K562 (cell line): ENCODE measurements at regions of chr20 and their contacts with region 1.

Region 1: GRCh38 chr20:9359561-9360308 is 154.7 kb upstream of the LAMP5 start:
- DNase-seq: peak in 2 of 4 experiments; percentile 13 to 41
- ATAC-seq: no peak
- H3K4me3 ChIP-seq: no peak overlapping the region
- H3K27ac ChIP-seq: no peak overlapping the region
- H3K4me1 ChIP-seq: no peaks in the 10 kb centered on the region; a peak in 1 of 5 replicates
- H3K27me3 ChIP-seq: no peaks in the 10 kb centered on the region
- CTCF ChIP-seq: peak; percentile 29 to 55 (median 36); a peak in 3 of 6 replicates
- EP300 ChIP-seq: no peak
- POLR2A ChIP-seq: no peak
- RAD21 ChIP-seq: peak; percentile 62 to 67

Region 2: GRCh38 chr20:8756410-8756809 is 603.3 kb before region 1 on chr20:
- CTCF ChIA-PET with region 1: interaction called, 3 read pairs
- POLR2A ChIA-PET with region 1: no interaction called
- in situ Hi-C with region 1: loop called (anchors 10 kb)
- intact Hi-C with region 1: loop called (anchors 10 kb)
- DNase-seq: peak in 2 of 4 experiments; percentile 25 to 29
- ATAC-seq: peak; percentile 41; the same call in 1 of the 3 replicates
- H3K4me3 ChIP-seq: no peak overlapping the region
- H3K27ac ChIP-seq: no peak overlapping the region
- H3K4me1 ChIP-seq: no peaks in the 10 kb centered on the region
- H3K27me3 ChIP-seq: no peaks in the 10 kb centered on the region
- CTCF ChIP-seq: no peak
- EP300 ChIP-seq: no peak
- POLR2A ChIP-seq: no peak
- RAD21 ChIP-seq: no peak

Region 3: GRCh38 chr20:8764344-8764962 is 595.3 kb before region 1 on chr20:
- CTCF ChIA-PET with region 1: no interaction called
- POLR2A ChIA-PET with region 1: no interaction called
- in situ Hi-C with region 1: loop called (anchors 10 kb)
- intact Hi-C with region 1: loop called (anchors 10 kb)
- DNase-seq: no peak
- ATAC-seq: no peak
- H3K4me3 ChIP-seq: no peak overlapping the region
- H3K27ac ChIP-seq: no peak overlapping the region
- H3K4me1 ChIP-seq: no peaks in the 10 kb centered on the region
- H3K27me3 ChIP-seq: no peaks in the 10 kb centered on the region
- CTCF ChIP-seq: no peak
- EP300 ChIP-seq: no peak
- POLR2A ChIP-seq: no peak
- RAD21 ChIP-seq: no peak

Region 4: GRCh38 chr20:8790442-8791074 is 569.2 kb before region 1 on chr20:
- CTCF ChIA-PET with region 1: interaction called, 5 read pairs
- POLR2A ChIA-PET with region 1: no interaction called
- in situ Hi-C with region 1: no loop called
- intact Hi-C with region 1: loop called (anchors 1 kb)
- DNase-seq: peak; percentile 15 to 44 (median 26)
- ATAC-seq: no peak
- H3K4me3 ChIP-seq: no peak overlapping the region
- H3K27ac ChIP-seq: no peak overlapping the region
- H3K4me1 ChIP-seq: no peaks in the 10 kb centered on the region
- H3K27me3 ChIP-seq: no peaks in the 10 kb centered on the region
- CTCF ChIP-seq: peak; percentile 51 to 70 (median 67); a peak in 4 of 6 replicates
- EP300 ChIP-seq: no peak
- POLR2A ChIP-seq: no peak
- RAD21 ChIP-seq: peak; percentile 62 to 71

Region 5: DNA sequence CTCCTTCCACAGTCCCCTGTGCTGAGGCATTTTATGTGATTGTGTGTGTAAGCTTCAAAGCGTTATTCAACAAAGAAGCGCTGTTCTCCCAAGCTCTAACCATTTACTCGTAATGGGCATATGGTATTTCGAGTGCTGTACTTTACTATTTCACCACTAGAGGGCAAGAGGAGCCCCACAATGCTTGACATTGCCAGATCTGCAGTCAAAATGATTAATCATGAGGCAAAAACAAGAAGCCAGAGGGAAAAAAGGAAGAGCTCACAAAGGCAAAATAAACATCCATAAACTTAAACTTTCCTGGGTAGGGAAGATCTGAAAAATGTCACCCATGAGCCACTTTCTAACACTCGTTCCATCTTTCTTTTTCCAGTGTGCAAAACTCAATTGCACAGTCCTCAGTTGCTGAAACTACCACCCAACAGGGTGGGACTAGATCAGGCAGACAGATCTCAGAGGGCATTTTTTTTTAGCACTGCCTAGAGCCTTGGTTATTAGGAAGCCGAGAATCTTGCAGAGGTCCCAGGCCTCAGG is 505.9 kb before region 1 on chr20:
- CTCF ChIA-PET with region 1: no interaction called
- POLR2A ChIA-PET with region 1: no interaction called
- in situ Hi-C with region 1: no loop called
- intact Hi-C with region 1: loop called (anchors 1 kb)
- DNase-seq: peak; percentile 39 to 61 (median 40)
- ATAC-seq: peak; percentile 88
- H3K4me3 ChIP-seq: no peak overlapping the region
- H3K27ac ChIP-seq: no peak overlapping the region
- H3K4me1 ChIP-seq: no peaks in the 10 kb centered on the region
- H3K27me3 ChIP-seq: no peaks in the 10 kb centered on the region
- CTCF ChIP-seq: peak; percentile 55 to 71 (median 68); a peak in 5 of 6 replicates
- EP300 ChIP-seq: no peak
- POLR2A ChIP-seq: no peak
- RAD21 ChIP-seq: peak; percentile 72 to 75

Region 6: DNA sequence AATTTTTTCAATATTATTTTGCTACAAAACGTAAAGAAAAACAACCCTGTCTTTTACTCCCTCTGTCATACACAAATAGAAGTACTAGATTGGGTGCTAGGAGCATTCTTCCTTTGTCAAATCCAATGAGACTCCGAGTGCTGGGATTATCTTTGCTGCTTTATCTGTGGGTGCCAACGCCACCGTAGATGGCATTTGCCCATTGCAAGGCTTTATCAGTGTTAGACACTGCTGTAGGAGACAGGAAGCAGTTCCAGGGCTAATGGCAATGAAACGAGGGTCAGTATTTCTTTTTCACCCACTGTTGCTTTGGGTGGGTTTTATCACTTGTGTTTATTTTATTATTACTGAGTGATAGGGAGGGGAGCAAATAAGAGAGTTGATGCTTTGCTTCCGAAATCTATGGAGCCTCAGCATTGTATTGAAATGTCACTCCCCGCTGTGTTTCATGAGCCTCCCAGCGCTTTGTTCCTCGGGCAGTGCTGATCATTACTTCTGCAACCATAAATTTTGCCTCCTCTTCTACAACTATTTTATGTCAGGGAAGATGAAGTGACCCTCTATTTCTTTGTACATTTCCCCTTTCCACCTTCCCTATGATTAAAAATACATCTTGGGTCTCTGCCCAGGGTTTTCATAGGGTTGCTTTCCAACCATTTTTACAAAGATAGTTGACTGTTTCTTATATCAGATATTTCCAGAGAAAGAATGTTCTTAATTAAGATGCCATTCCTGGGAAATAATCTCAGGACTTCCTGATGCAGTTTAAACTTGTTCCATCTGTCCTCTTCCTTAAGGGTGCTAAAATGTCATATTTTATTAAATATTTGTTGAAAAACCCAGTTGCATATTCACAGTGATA is 67.9 kb after region 1 on chr20:
- CTCF ChIA-PET with region 1: no interaction called
- POLR2A ChIA-PET with region 1: no interaction called
- in situ Hi-C with region 1: no loop called
- intact Hi-C with region 1: no loop called
- DNase-seq: no peak
- ATAC-seq: no peak
- H3K4me3 ChIP-seq: no peak overlapping the region
- H3K27ac ChIP-seq: no peak overlapping the region
- H3K4me1 ChIP-seq: no peaks in the 10 kb centered on the region
- H3K27me3 ChIP-seq: no peaks in the 10 kb centered on the region
- CTCF ChIP-seq: no peak
- EP300 ChIP-seq: no peak
- POLR2A ChIP-seq: no peak
- RAD21 ChIP-seq: no peak